Activated CD4-positive, alpha-beta memory T cell treated with anti-CD3 and anti-CD28 coated beads for 36 hours (primary cell): ENCODE measurements at regions of chr21 and their contacts with region 1.

Region 1: GRCh38 chr21:14591882-14592281 is 45.8 kb upstream of the SAMSN1 start:
- DNase-seq: no peak
- H3K4me3 Mint-ChIP-seq: no peak overlapping the region
- H3K27ac Mint-ChIP-seq: peak overlapping the region; percentile 23
- H3K4me1 Mint-ChIP-seq: peaks cover 21% of the 10 kb centered on the region
- H3K27me3 Mint-ChIP-seq: no peaks in the 10 kb centered on the region

Region 2: GRCh38 chr21:14482165-14482564 is 109.7 kb before region 1 on chr21:
- CTCF ChIA-PET with region 1: no interaction called
- POLR2A ChIA-PET with region 1: no interaction called
- intact Hi-C with region 1: loop called (anchors 5 kb)
- DNase-seq: peak; percentile 28
- H3K4me3 Mint-ChIP-seq: peak overlapping the region; percentile 27
- H3K27ac Mint-ChIP-seq: peak overlapping the region; percentile 92
- H3K4me1 Mint-ChIP-seq: peaks cover 44% of the 10 kb centered on the region
- H3K27me3 Mint-ChIP-seq: no peaks in the 10 kb centered on the region

Region 3: GRCh38 chr21:14533504-14534428 is 58.1 kb before region 1 on chr21:
- CTCF ChIA-PET with region 1: no interaction called
- POLR2A ChIA-PET with region 1: no interaction called
- intact Hi-C with region 1: loop called (anchors 2 kb)
- DNase-seq: peak; percentile 29
- H3K4me3 Mint-ChIP-seq: peak overlapping the region; percentile 95
- H3K27ac Mint-ChIP-seq: peak overlapping the region; percentile 100
- H3K4me1 Mint-ChIP-seq: peaks cover 82% of the 10 kb centered on the region
- H3K27me3 Mint-ChIP-seq: peaks cover 2% of the 10 kb centered on the region

Region 4: GRCh38 chr21:14572204-14572780 is 19.6 kb before region 1 on chr21:
- CTCF ChIA-PET with region 1: no interaction called
- POLR2A ChIA-PET with region 1: no interaction called
- intact Hi-C with region 1: loop called (anchors 2 kb)
- DNase-seq: no peak
- H3K4me3 Mint-ChIP-seq: no peak overlapping the region
- H3K27ac Mint-ChIP-seq: peak overlapping the region; percentile 5
- H3K4me1 Mint-ChIP-seq: peaks cover 14% of the 10 kb centered on the region
- H3K27me3 Mint-ChIP-seq: no peaks in the 10 kb centered on the region

Region 5: GRCh38 chr21:14609274-14609673 is 17.4 kb after region 1 on chr21:
- CTCF ChIA-PET with region 1: no interaction called
- POLR2A ChIA-PET with region 1: no interaction called
- intact Hi-C with region 1: loop called (anchors 2 kb)
- DNase-seq: no peak
- H3K4me3 Mint-ChIP-seq: no peak overlapping the region
- H3K27ac Mint-ChIP-seq: peak overlapping the region; percentile 8
- H3K4me1 Mint-ChIP-seq: peaks cover 12% of the 10 kb centered on the region
- H3K27me3 Mint-ChIP-seq: no peaks in the 10 kb centered on the region

Region 6: GRCh38 chr21:14737922-14738321 is 146.0 kb after region 1 on chr21:
- CTCF ChIA-PET with region 1: no interaction called
- POLR2A ChIA-PET with region 1: no interaction called
- intact Hi-C with region 1: loop called (anchors 5 kb)
- DNase-seq: peak; percentile 38
- H3K4me3 Mint-ChIP-seq: no peak overlapping the region
- H3K27ac Mint-ChIP-seq: no peak overlapping the region
- H3K4me1 Mint-ChIP-seq: peaks cover 31% of the 10 kb centered on the region
- H3K27me3 Mint-ChIP-seq: no peaks in the 10 kb centered on the region